Naive thymus-derived CD8-positive, alpha-beta T cell (primary cell): ENCODE measurements at regions of chr1 and their contacts with region 1.

Region 1: GRCh38 chr1:39561279-39561678 is 15.3 kb downstream of the PABPC4 start:
- DNase-seq: no peak
- ATAC-seq: no peak
- H3K4me3 Mint-ChIP-seq: no peak overlapping the region
- H3K27ac Mint-ChIP-seq: peak overlapping the region in 3 of 10 donors; percentile 7 to 38 (median 14)
- H3K4me1 Mint-ChIP-seq: peaks cover 7 to 20% (median 14%) of the 10 kb centered on the region in 4 donors
- H3K27me3 Mint-ChIP-seq: no peaks in the 10 kb centered on the region

Region 2: DNA sequence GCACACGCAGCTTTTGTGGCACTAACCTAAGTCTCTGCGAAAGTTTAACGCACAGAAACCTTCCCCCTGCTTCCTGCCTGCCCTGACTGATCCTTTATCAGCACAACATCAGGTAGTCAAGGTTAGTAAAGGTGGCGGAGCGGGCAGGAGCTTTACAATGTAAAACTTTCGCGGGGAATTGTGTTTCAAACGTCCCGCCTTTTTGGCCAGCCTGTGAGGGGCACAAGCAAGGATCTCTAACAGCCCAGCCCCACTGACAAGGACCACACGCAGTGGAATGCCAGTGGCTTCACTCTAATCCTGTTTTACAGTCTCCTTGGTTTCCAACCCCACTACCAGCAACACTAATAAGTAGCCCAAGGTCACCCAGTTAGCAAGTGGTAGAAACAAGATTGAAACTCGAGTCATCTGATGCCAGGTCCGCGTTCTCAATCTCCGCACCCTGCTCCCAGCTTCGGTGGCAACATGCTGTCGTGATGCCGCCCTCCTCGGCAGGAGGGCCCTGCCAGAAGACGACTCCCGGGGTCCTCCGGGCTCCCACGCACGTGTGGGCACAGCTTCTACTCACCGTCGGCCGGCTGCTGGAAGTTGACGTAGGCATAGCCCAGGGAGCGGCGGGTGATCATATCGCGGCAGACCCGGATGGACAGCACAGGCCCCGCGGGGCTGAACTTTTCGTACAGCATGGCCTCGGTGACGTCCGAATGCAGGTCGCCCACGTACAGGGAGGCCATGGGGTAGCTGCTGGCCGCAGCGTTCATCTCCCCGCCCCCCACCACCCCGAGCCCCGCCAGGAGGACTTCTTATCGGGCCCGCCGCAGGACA is 14.1 kb after region 1 on chr1:
- POLR2A ChIA-PET with region 1: interaction called, 18 read pairs
- DNase-seq: peak; percentile 23 to 76 (median 60)
- ATAC-seq: peak; percentile 37 to 69
- H3K4me3 Mint-ChIP-seq: peak overlapping the region; percentile 87 to 94 (median 92)
- H3K27ac Mint-ChIP-seq: peak overlapping the region; percentile 75 to 97 (median 94)
- H3K4me1 Mint-ChIP-seq: peaks cover 19 to 49% (median 48%) of the 10 kb centered on the region in 4 donors
- H3K27me3 Mint-ChIP-seq: no peaks in the 10 kb centered on the region